Tibial artery (tissue), 4 donors: ENCODE measurements at regions of chrX and their contacts with region 1.

Region 1: DNA sequence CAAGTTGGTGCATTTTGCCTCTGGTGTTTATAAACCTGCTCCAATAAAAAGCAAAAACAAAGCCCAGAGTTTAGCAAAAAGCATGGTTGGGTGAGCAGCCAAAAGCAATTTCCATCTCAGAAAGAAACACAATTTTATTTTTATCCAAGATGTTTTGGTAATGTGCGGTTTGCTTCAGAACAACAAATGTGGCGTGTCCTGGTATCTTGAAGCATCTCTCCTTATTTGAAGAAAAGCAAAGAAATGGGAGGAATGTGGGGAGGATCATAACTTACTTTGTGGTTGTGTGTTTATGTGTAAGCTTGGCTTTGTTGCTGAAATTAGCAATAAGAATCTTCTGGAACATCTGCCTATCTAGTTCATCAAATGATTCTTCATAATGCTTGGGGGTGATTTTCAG is 88.3 kb upstream of the DDX3X start:
- DNase-seq: no peak
- H3K4me3 ChIP-seq: no peak overlapping the region
- H3K27ac ChIP-seq: no peak overlapping the region
- H3K4me1 ChIP-seq: no peaks in the 10 kb centered on the region
- H3K27me3 ChIP-seq: no peaks in the 10 kb centered on the region
- CTCF ChIP-seq: no peak

Region 2: DNA sequence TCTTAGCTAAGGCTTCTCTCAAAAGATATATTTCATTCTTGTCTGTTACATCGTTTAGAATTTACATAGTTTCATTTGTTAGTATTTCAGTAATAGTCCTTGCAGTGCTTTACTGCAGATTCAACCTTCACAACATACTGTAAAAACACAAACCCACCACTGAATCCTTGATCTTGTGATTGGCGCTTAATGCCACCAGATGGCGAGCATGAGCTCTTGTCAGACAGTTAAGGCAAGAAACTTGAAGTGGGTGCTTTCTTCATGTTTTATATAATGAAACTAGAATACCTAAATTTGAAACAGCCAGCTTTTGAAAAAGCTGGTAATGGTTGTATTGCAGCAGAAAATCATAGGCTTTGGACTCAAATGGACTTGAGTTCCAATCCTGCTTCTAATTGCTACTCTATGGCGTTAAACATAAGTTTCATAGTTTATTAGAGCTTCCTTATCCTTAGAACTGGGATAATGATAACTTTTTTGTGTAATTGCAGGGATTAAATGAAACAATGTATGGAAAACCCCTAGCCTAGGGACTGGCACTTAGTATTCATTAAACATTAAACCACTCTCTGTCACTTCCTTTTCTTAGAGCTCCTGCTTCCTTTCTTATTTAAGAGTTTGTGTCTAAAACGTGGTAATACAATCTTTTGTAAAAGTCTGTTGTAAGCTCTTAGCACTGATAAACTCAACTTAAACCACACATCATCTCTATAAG is 65.3 kb before region 1 on chrX:
- intact Hi-C with region 1: loop called (anchors 10 kb)
- DNase-seq: peak in 1 of 2 donors; percentile 33
- H3K4me3 ChIP-seq: no peak overlapping the region
- H3K27ac ChIP-seq: no peak overlapping the region
- H3K4me1 ChIP-seq: no peaks in the 10 kb centered on the region
- H3K27me3 ChIP-seq: no peaks in the 10 kb centered on the region
- CTCF ChIP-seq: peak; percentile 31 to 53

Region 3: DNA sequence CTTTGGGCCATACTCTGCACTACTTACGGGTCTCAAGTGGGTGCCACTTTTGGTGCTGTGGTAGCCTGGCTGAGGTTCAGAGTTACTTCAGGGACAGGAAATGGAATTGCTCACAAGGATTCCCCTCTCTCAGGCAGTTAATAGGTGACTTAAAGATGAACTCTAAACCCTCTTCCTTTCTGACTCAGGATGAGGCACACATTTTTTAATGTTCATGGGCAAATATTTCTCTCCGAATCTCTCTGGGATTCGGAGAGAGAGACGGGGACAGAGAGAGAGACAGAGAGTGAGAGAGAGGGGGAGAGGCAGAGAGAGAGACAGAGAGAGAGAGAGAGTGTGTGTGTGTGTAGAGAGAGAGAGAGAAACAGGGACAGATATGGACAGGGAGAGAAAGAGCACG is 281.3 kb after region 1 on chrX:
- intact Hi-C with region 1: no loop called
- DNase-seq: no peak
- H3K4me3 ChIP-seq: no peak overlapping the region
- H3K27ac ChIP-seq: no peak overlapping the region
- H3K4me1 ChIP-seq: peaks cover 0 to 33% (median 0%) of the 10 kb centered on the region in 4 donors
- H3K27me3 ChIP-seq: no peaks in the 10 kb centered on the region
- CTCF ChIP-seq: no peak